ENCODE measurements at regions of chr20 and their contacts with region 1.

Region 1: DNA sequence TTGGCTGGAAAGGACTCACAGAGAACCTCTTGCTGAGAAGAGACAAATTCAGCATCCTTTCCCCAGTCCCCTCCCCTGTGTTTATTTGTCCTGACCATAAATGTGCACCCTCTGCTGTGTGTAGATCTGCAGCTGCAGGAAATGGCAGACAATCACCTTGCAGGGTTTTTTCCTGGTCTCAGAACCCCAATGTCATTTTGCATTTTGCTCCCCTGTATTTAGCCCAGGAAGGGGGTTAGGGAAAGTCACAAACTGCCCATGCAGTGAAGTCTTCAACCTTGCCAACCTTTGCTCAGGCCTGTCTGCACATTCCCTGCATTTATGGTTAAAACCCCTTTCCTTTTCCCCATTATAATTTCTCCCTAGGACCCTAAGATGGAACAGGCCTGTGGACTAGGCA is 513.7 kb downstream of the PREX1 start:
- DNase-seq: no peak
- H3K4me3 ChIP-seq: no peak overlapping the region
- CTCF ChIP-seq: no peak
- POLR2A ChIP-seq: no peak

Region 2: GRCh38 chr20:47568001-47568407 is 746.1 kb before region 1 on chr20:
- intact Hi-C with region 1: no loop called
- DNase-seq: peak in 1 of 2 donors; percentile 25
- H3K4me3 ChIP-seq: no peak overlapping the region
- CTCF ChIP-seq: no peak
- POLR2A ChIP-seq: no peak

Region 3: GRCh38 chr20:48284837-48285236 is 29.2 kb before region 1 on chr20:
- intact Hi-C with region 1: loop called (anchors 1 kb)
- DNase-seq: no peak
- H3K4me3 ChIP-seq: no peak overlapping the region
- CTCF ChIP-seq: no peak
- POLR2A ChIP-seq: no peak